Activated T-helper 2 cell treated with anti-CD3 and anti-CD28 coated beads, Interferon-gamma antibody, Interleukin-2, Interleukin-4, amounts not matched to agents 10 μg/mL and 5 μg/mL and 100 μg/mL, durations not matched to agents 14 hours and 24 hours and 36 hours (primary cell): ENCODE measurements at regions of chr1 and their contacts with region 1.

Region 1: DNA sequence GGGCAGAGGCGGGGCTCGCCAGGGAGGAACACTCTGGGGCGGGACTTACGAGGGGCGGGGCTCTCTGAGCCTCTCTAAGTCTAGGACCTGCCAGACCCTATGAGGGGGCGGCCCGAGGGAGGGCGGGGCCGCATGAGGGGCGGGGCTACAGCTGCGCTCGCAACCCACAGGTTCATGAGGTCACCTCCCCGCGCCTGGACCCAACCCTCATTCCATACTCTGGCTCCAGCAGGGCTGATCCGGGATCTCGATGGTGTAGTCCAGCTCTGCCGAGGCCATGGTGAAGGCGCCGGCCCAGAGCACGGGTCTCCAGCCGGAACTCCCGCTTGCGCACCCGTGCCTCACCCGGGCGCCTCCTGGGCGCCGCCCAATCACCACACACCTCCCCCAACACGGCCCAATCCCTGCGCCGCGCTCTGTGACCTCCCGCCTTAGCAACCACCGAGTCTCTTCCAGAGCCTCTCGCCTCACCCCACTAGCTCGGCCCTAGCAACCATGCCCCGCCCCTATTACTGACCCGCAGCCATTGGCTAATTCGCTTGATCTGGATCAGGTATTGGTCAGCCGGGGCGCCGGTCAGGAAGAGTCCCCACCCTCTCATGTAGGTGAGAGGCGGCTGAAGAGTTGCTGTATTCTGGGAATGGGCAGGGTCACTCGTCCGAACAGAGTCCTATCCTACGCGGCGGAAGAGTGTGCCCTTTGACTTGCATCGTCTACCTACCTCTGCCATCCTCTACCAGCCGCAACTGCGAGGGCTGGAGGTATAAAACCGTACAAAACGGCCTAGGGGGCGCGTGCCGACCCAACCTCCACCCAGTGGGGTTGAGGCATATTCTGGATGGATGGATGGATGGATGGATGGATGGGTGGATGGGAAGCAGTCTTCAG is at the starts of genes ARMH1 and TMEM53:
- DNase-seq: peak; percentile 98
- H3K4me3 Mint-ChIP-seq: peak within 1 kb of the TSS; percentile 80
- H3K27ac Mint-ChIP-seq: peak within 1 kb of the TSS; percentile 86
- H3K4me1 Mint-ChIP-seq: peaks cover 26% of the 10 kb centered on the region
- H3K27me3 Mint-ChIP-seq: no peaks in the 10 kb centered on the region
- total RNA-seq, gene ARMH1: 139 and 157 TPM in 2 replicates
- total RNA-seq, gene TMEM53: 6.3 and 6.7 TPM in 2 replicates

Region 2: GRCh38 chr1:44631647-44632539 is 42.5 kb before region 1 on chr1:
- intact Hi-C with region 1: loop called (anchors 1 kb)
- DNase-seq: peak; percentile 86
- H3K4me3 Mint-ChIP-seq: peak overlapping the region; percentile 86
- H3K27ac Mint-ChIP-seq: peak overlapping the region; percentile 94
- H3K4me1 Mint-ChIP-seq: peaks cover 35% of the 10 kb centered on the region
- H3K27me3 Mint-ChIP-seq: no peaks in the 10 kb centered on the region

Region 3: DNA sequence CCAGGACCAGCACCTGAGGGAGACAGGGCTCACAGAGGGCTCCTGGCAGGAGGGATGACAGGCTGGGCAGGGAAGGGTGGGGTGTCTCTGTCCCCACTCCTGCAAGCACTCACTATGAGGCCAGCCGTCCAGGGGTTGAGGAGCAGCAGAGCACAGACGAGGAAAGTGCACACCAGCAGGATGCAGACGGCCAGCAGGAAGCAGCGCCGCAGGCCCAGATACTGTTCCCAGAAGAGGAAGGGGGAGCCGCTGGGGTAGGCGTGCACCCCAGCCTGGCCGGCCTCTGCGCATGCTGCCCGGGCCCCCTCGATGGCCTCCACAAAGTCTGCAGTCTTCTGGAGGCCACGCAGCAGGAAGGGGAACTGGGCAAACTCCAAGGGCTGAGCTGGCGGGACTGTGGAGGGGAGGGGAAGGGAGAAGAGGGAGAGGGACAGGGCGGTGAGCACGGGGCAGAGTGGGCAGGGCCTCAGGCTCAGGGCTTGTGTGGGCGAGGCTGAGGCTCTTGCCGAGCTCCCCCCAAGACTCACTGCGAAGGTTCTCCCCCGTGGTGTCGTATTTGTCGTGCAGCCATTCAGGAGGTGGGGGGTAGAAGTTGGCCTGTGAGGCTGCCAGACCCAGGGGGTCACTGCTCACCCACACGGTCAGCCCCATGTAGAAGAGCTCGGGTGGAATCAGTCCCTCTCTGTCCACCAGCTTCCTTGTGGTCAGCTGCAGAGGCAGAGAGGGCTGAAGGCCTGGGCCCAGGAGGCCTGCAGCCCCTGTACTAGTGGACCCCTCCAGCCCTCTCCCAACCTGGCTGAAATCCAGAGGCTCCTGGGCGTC is 152.2 kb after region 1 on chr1:
- intact Hi-C with region 1: no loop called
- DNase-seq: no peak
- H3K4me3 Mint-ChIP-seq: no peak overlapping the region
- H3K27ac Mint-ChIP-seq: no peak overlapping the region
- H3K4me1 Mint-ChIP-seq: no peaks in the 10 kb centered on the region
- H3K27me3 Mint-ChIP-seq: no peaks in the 10 kb centered on the region